Prostate gland (tissue), 2 donors: ENCODE measurements at regions of chr5 and their contacts with region 1.

Region 1: GRCh38 chr5:39376293-39376714 is 12.0 kb upstream of the C9 start:
- DNase-seq: peak; percentile 32
- H3K4me3 ChIP-seq: no peak overlapping the region
- H3K27ac ChIP-seq: no peak overlapping the region
- H3K4me1 ChIP-seq: no peaks in the 10 kb centered on the region
- H3K27me3 ChIP-seq: no peaks in the 10 kb centered on the region
- CTCF ChIP-seq: peak in 3 of 4 experiments; percentile 68 to 74 (median 73)
- POLR2A ChIP-seq: no peak

Region 2: DNA sequence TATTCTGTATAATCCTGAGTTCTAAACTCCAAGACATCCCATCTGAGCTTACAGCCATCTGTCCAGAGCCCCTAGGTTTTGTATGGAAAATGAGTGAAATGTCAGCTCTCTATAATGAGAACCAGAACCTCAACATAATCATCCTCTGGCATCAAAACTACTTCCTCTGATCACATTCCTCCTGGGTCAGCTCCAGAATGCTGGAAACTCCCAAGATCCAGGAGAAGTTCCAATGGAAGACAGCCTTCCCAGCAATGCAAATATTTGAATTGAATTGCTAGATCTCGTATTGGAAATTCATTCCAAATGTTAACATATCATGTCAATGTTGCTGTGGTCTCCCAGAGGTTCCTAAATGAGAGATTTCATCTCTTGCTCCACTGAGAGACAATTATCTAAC is 35.8 kb before region 1 on chr5:
- intact Hi-C with region 1: no loop called
- DNase-seq: no peak
- H3K4me3 ChIP-seq: no peak overlapping the region
- H3K27ac ChIP-seq: no peak overlapping the region
- H3K4me1 ChIP-seq: no peaks in the 10 kb centered on the region
- H3K27me3 ChIP-seq: no peaks in the 10 kb centered on the region
- CTCF ChIP-seq: no peak
- POLR2A ChIP-seq: no peak

Region 3: DNA sequence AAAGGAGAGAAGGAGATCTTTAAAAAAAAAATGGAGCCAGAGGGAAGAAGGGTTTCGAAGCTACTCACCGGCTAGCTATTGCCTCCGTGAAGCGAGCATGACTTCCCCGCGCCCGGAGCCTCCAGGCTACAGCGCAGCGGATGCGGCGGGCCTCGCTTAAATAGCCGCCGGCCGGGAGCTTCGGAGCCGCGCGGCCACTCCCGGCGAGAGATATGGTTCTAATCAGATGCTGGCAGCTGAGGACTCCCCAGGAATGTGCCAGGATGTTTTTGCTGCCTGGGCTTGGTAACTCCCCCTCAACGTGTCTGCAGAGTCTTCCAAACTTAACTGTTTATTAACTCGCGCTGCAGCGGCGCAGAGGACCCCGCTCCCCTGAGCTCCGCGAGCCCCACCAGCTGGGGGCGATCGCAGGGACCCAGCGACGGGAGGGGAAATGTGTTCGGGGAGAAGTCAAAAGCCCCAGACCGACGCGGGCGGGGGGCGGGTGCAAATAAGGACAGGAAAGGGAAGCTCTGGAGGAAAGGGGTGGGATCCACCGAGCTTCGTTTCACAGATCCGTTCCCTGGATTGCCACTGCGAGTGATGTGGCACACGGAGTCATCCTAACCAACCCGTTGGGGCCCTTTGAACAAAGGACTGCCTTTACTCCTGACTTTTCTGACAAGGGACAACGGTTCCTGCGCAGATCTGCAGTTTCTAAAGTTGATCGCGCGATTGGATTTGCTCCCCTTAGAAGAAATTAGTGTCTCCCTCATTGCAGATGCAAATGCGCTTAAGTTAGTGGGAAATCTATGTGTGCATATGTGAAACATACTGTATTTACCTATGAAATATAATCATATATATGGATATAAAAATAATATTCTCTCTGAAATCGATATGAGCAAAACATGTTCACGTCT is 48.7 kb after region 1 on chr5 and contains the start of gene DAB2:
- intact Hi-C with region 1: loop called (anchors 5 kb)
- DNase-seq: peak; percentile 36
- H3K4me3 ChIP-seq: peak within 1 kb of the TSS; percentile 48 to 50
- H3K27ac ChIP-seq: peak within 1 kb of the TSS; percentile 66 to 71
- H3K4me1 ChIP-seq: no peaks in the 10 kb centered on the region
- H3K27me3 ChIP-seq: no peaks in the 10 kb centered on the region
- CTCF ChIP-seq: peak in 3 of 4 experiments; percentile 22 to 38 (median 37)
- POLR2A ChIP-seq: no peak
- total RNA-seq, gene DAB2: 15.6 to 38.1 TPM

Region 4: DNA sequence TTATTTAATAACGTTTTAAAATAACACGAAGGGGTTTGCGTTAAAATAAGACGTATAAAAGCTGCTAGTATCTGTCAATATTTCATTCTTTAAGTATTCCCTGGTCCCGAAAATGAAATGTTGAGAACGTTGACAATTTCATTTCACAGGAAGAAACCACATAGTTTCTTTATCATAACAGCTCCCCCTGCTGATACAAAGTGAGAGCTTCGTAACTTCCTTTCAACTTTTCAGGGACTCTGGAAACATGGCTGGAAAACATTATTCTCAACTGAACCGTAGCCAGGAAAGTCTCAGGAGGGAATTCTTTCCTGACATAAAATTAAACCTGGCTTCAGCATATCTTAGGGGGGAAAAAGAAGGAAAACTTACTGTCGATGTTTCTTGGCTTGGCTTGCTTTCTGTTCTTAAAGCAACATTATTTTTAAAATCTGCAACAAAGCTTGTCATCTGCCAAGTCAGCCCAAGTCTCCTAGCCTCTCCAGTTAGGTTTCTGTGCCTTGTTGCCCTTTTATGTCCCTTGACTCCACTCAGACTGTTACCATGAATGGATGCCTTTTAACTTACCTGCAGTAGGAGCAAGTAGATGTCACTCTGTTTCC is 171.3 kb after region 1 on chr5:
- intact Hi-C with region 1: loop called (anchors 2 kb)
- DNase-seq: peak; percentile 39
- H3K4me3 ChIP-seq: no peak overlapping the region
- H3K27ac ChIP-seq: no peak overlapping the region
- H3K4me1 ChIP-seq: no peaks in the 10 kb centered on the region
- H3K27me3 ChIP-seq: no peaks in the 10 kb centered on the region
- CTCF ChIP-seq: peak; percentile 11 to 75 (median 70)
- POLR2A ChIP-seq: no peak

Region 5: GRCh38 chr5:39566891-39567290 is 190.6 kb after region 1 on chr5:
- intact Hi-C with region 1: loop called (anchors 5 kb)
- DNase-seq: no peak
- H3K4me3 ChIP-seq: no peak overlapping the region
- H3K27ac ChIP-seq: no peak overlapping the region
- H3K4me1 ChIP-seq: no peaks in the 10 kb centered on the region
- H3K27me3 ChIP-seq: no peaks in the 10 kb centered on the region
- CTCF ChIP-seq: no peak
- POLR2A ChIP-seq: no peak